ENCODE measurements at regions of chr2 and their contacts with region 1.

Region 1: DNA sequence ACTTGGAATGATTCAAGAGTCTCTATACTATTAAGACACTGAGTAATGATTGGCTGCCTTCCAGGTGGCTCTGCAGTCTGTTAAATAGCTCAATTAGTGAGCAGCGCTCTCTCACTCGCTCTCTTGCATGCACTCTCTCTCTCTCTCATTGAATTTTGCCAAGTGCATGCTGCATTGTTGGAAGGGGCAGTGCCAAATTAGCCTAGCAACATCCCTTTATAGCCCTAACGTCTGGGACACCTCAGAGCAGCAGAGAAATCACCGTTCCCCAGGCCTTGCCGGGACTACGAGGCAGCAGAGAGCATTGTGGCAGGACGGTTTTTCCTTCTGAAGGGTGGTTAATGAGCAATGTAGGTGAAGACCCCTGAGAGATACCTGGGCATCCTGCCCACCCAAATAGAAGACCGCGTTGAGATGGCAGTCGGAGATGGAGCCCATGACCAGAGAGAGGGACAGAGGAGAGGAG is 447.6 kb upstream of the POU3F3 start:
- DNase-seq: no peak

Region 2: DNA sequence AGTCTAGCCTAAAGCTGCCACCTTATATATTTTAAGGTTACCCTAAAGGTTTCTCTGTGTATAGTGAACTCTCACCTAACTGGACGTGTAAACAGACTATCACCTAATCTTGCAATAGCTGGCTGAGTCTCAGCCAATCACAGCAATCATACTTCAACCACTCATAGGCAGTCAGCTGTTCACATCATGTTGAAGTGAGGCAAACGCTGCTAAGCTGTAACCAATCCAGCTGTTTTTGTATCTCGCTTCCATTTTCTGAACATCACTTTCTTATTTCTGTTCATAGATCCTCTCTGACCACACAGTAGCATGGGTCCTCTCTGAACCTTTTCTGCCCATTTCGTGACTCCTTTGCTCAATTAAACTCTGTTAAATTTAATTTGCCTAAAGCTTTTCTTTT is 20.6 kb before region 1 on chr2:
- intact Hi-C with region 1: loop called (anchors 2 kb)
- DNase-seq: no peak

Region 3: DNA sequence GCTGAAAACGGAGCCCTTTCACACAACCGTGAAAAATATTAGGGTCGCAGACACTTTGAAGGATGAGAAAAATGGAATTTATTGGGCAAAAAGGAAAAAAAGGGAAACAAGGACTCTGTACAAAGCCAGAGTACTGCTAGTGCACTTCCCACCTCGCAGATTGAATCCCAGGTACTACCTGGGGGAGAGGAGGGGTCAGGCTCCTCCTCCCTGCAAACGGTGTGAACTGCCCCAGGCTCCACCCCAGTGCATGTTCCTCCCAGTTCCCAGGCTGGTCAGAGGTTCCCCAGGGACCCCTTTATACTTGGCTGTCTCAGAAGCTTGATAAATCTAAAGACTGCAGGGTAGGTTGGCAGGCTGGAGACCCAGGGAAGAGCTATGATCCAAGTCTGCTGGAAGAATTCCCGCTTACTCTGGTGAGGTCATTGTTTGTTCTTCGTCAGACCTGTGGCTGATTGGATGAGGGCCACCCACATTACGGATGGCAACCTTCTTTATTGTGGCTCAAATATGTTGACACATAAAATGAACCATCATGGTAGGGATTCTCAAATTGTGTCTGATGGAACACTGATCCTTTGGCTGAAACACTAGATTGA is 157.2 kb after region 1 on chr2:
- intact Hi-C with region 1: no loop called
- DNase-seq: no peak

Region 4: DNA sequence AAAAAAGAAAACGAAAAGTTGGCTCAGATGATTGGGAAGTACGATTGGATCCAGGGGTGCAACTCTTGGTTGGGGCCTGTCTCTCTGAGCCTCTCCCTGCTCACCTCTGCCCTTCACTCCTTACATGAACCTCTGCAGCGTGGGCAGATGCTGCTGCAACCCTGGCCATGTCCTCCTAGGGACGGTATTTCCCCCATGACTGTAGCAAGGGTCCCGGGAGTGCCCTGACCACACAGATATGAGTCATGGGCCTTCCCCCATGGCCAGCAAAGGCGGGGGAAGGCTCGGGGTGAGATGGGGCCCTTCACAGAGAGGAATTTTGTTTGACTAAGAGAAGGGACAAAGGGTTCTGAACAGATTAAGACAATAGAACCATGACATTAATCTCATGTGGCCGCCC is 1467.4 kb after region 1 on chr2:
- intact Hi-C with region 1: no loop called
- DNase-seq: no peak

Measured in cardiac septum (tissue), 1 donor.